A549 (cell line): ENCODE measurements at regions of chr15 and their contacts with region 1.

Region 1: DNA sequence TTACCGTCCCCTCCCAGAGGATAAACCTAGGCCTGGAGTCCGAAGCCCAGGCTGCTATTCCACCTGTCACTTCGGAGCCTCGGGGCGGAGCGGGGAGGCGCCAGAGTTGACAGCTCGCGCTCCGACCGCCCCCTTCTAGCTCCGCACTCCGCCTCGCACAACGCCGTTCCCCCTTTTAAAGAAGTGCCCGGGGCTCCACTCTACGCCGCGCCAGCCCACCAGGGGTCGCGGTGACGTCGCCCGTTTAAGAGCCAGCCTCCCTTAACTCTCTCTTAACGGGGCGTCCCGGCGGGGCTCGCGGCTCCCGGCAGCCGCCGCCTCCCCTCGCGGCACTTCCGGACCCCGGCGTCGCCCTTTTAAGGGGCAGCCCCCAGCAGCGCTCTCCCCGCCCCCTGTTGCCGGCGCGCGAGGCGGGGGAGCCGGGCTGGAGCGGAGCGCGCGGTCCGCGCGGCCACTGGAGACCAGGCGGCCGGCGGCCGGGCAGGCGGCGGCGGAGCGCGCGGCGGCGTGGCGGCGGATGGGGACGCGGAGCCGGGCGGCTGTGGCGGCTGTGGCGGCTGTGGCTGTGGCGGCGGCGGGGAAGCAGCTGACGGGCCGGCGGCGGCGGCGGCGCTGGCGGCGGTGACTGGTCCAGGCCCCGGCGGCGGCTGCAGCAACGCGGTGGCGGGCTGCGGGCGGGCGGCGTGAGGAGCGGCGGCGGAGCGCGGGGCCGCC is at the start of gene INAFM2:
- DNase-seq: peak; percentile 66 to 77
- ATAC-seq: peak; percentile 74 to 92
- H3K4me3 ChIP-seq: peak within 1 kb of the TSS; percentile 75
- H3K27ac ChIP-seq: peak within 1 kb of the TSS; percentile 73 to 90
- H3K4me1 ChIP-seq: peaks cover 9% of the 10 kb centered on the region; the same call in 1 of the 3 replicates
- CTCF ChIP-seq: peak; percentile 21; the same call in 2 of the 3 replicates
- EP300 ChIP-seq: no peak
- POLR2A ChIP-seq: 0 out of 2 replicates have a peak, but pooled peaks have one; percentile 17
- RAD21 ChIP-seq: no peak
- polyA plus RNA-seq, gene INAFM2: 2.8 and 3.5 TPM in 2 replicates

Region 2: DNA sequence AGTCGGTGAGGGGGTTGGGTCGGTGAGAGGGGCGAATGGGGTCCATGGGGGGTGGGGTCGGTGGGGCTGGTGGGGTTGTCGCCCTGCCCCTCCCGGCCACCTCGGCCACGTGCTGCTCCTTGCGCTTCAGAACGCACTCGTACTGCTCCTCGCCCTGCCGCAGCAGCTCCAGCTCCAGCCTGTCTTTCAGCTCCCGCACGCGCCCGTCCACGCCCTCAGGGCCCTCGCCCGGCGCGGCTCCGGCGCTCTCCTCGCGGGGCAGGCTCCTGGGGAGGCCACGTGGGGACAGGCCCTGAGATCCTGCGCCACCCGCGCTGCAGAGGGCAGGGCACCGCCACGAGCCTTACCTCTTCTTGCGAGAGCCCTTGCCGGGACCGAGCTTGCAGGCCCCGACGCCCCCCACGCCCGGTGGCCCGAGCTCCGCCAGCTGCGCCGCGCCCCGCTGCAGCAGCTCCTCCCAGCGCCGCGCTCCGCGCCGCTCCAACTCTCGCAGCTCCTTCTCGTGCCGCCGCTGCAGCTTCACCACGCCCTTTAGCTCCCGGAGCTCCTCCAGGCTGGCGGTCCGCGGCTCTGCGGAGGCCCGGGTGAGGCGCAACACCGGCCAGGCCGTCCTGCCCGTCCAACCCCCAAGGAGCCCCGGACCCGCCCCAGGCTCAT is 32.4 kb before region 1 on chr15:
- CTCF ChIA-PET with region 1: interaction called, 19 read pairs
- POLR2A ChIA-PET with region 1: no interaction called
- DNase-seq: peak; percentile 31 to 38
- ATAC-seq: peak; percentile 67 to 82
- H3K4me3 ChIP-seq: peak overlapping the region; percentile 34
- H3K27ac ChIP-seq: peak overlapping the region; percentile 61 to 87; a peak in 5 of 6 replicates
- H3K4me1 ChIP-seq: peaks cover 11% of the 10 kb centered on the region; the same call in 2 of the 3 replicates
- CTCF ChIP-seq: no peak
- EP300 ChIP-seq: no peak
- POLR2A ChIP-seq: no peak
- RAD21 ChIP-seq: no peak

Region 3: DNA sequence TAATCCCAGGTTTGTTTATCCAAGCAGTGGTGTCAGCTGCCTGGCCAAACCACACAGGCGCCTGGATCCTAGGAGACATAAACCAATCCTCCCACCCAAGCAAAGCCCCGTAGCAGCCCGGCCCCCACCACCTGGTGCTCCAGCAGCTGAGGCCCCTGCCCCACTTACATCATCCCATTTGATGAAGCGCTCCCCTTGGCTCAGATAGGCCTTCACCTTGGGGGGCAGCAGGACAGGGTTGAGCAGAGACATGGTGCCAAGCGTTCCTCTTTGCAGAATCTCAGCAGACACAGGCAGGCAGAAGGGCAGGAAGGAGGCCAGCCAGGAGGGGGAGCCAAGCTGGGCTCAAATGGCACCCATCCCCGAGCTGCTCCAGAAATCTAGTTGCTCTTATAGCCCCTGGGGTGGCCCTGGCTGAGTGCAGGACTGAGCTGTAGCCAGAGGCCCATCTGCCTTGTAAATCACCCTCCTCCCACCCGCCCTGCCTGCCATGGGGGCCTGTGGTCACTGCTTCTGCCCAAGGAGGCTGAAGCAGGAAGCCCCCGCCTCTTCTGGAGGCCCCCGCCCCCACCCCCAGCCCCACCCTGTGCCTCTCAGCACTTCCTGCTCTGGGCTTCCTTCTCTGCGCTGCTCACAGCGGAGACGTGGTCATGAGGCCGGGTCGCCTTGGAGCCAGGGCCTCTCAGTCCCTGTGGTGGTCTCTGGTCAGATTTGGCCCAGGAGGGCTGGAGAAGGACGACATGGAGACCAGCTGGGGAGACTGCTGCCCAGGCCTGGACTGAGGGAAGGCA is 15.8 kb before region 1 on chr15 and contains the start of gene PLCB2:
- CTCF ChIA-PET with region 1: interaction called, 51 read pairs
- POLR2A ChIA-PET with region 1: no interaction called
- DNase-seq: peak in 1 of 2 experiments; percentile 23
- ATAC-seq: peak; percentile 42 to 70; a peak in 4 of 6 replicates
- H3K4me3 ChIP-seq: no peak within 1 kb of the TSS
- H3K27ac ChIP-seq: no peak within 1 kb of the TSS
- H3K4me1 ChIP-seq: no peaks in the 10 kb centered on the region
- CTCF ChIP-seq: no peak
- EP300 ChIP-seq: no peak
- POLR2A ChIP-seq: no peak
- RAD21 ChIP-seq: no peak
- polyA plus RNA-seq, gene PLCB2: 0.19 and 0.30 TPM in 2 replicates

Region 4: GRCh38 chr15:40344631-40345120 is 21.3 kb after region 1 on chr15:
- CTCF ChIA-PET with region 1: interaction called, 139 read pairs
- POLR2A ChIA-PET with region 1: interaction called, 20 read pairs
- DNase-seq: peak; percentile 55 to 61
- ATAC-seq: peak; percentile 48 to 63; a peak in 5 of 6 replicates
- H3K4me3 ChIP-seq: no peak overlapping the region
- H3K27ac ChIP-seq: peak overlapping the region; percentile 16 to 71; a peak in 3 of 6 replicates
- H3K4me1 ChIP-seq: peaks cover 44% of the 10 kb centered on the region
- CTCF ChIP-seq: peak; percentile 51
- EP300 ChIP-seq: no peak
- POLR2A ChIP-seq: no peak
- RAD21 ChIP-seq: peak; percentile 51 to 64; a peak in 4 of 5 replicates

Region 5: DNA sequence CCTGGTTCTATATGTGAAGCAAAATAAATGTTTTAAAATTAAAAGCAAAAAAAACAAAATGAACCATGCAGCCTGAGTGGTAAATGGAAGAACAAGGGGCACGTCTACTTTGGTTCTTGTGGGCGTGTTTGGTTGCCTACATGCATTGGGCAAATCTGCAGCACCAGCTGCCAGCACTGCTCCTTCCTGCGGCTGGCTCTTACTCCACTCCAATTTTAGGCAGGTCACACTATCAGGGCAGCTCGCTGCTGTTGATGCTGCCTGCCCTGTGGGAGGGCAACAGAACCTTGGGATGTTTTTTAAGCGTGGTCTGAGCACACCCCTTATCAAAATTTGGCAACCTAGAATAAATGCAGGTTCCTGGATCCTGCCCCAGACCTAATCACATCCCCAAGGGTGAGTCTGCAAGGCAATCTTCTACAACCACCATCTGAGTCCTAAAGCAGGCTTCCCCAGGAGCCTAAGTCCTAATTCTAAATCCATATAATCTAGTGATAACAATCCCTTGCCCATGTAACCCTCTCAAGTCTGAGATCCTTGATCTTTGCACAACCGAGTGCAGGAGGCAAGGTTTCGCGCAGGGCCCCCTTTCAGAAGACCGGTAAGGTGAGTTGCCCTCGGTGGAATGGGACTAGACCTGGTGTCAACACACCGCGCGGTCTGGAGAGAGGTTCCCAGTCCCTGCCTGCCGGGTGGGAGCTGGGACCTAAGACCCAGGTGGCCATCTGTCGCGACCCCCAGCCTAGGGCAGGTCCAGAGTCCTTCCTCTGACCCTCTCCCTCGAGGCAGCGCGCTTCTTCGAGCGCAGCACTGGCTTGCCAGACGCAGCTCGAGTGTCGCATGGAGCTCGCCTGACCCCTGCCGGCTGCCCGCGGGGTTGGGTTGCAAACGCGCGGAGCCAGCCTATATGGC is 98.1 kb after region 1 on chr15:
- CTCF ChIA-PET with region 1: interaction called, 59 read pairs
- POLR2A ChIA-PET with region 1: no interaction called
- DNase-seq: peak; percentile 55 to 63
- ATAC-seq: peak; percentile 97
- H3K4me3 ChIP-seq: no peak overlapping the region
- H3K27ac ChIP-seq: no peak overlapping the region
- H3K4me1 ChIP-seq: peaks cover 4% of the 10 kb centered on the region; the same call in 2 of the 3 replicates
- CTCF ChIP-seq: peak; percentile 68
- EP300 ChIP-seq: no peak
- POLR2A ChIP-seq: no peak
- RAD21 ChIP-seq: peak; percentile 81 to 85

Region 6: DNA sequence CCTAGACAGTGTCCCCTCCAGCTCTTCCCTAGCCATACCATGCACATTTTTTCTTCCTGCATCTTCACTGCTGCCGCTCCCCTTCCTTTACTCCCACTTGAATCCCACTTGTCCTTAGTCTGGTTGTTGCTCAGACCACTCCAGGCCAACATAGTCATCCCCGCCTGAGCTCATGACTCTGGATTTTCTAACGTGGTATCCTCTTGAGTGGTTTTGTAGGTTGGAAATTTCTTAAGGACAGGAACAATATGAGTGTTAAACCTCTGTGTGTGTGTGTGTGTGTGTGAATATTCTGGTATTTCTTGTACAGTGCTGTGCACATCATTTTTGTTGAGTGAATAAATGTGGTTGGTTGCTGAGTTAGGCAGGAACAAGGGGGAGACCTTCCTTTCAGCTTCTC is 120.5 kb after region 1 on chr15:
- CTCF ChIA-PET with region 1: no interaction called
- POLR2A ChIA-PET with region 1: no interaction called
- DNase-seq: no peak
- ATAC-seq: no peak
- H3K4me3 ChIP-seq: no peak overlapping the region
- H3K27ac ChIP-seq: no peak overlapping the region
- H3K4me1 ChIP-seq: peaks cover 8% of the 10 kb centered on the region; the same call in 1 of the 3 replicates
- CTCF ChIP-seq: no peak
- EP300 ChIP-seq: no peak
- POLR2A ChIP-seq: no peak
- RAD21 ChIP-seq: no peak

Region 7: GRCh38 chr15:40506964-40507571 is 183.7 kb after region 1 on chr15:
- CTCF ChIA-PET with region 1: no interaction called
- POLR2A ChIA-PET with region 1: no interaction called
- DNase-seq: peak; percentile 71 to 79
- ATAC-seq: peak; percentile 97 to 98
- H3K4me3 ChIP-seq: peak overlapping the region; percentile 14; the same call in 1 of the 3 replicates
- H3K27ac ChIP-seq: peak overlapping the region; percentile 55 to 86; a peak in 5 of 6 replicates
- H3K4me1 ChIP-seq: peaks cover 7% of the 10 kb centered on the region; the same call in 2 of the 3 replicates
- CTCF ChIP-seq: peak; percentile 54
- EP300 ChIP-seq: no peak
- POLR2A ChIP-seq: no peak
- RAD21 ChIP-seq: peak; percentile 53 to 58